Right ventricle myocardium inferior (tissue), 1 donor: ENCODE measurements at regions of chr10 and their contacts with region 1.

Region 1: DNA sequence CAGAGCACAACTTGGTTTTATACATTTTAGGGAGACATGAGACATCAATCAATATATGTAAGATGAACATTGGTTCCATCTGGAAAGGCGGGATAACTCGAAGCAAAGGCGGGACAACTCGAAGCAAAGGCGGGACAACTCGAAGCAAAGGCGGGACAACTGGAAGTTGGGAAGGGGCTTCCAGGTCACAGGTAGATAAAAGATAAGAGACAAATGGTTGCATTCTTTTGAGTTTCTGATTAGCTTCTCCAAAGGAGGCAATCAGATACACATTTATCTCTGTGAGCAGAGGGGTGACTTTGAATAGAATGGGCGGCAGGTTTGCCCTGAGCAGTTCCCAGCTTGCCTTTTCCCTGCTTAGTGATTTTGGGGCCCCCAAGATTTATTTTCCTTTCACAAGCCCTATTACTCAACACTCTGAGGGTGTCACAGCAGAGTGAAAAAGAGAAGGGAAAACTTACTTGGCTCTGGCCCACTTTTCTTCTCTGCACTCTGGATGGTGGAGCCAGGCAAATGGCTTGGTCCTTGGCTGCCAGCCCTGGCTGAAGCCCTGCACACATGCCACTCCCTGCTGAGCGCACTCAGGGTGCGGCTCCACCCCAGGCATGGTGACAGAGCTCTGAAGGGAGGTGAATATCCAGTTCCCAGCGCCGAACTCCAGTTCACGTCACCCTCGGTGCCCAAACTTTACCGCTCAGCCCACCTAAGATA is 46.7 kb downstream of the PARD3 start:
- DNase-seq: peak; percentile 87
- ATAC-seq: peak; percentile 94

Region 2: DNA sequence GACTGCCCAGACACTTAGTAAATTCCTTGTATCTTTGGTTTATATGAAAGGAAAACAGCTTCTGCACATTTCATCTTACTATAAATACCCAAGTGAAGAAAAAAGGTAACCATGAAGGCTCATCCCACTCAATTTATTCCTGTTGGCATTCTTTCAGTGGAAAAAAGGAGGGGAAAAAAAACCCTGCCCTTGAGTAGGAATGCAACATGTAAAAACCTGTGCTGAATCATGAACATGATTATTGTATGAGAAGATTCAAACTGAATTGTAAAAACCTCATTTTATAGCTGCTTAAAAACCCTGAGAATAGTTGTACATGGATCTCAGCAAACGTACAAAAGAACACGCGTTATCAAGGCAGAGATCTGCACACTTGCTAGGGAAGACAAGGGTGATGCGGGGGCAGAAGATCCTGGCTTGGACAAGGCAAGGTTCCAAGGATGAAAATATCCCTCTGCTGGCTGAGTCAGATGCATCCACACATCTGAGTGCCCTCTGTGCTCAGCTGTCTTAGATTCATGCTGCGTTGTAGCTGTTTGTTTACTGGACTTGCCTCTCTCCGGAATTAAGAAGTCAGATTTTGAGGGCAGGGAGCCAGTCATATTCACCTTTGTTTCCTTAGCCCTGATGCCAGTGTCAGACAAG is 611.5 kb before region 1 on chr10:
- intact Hi-C with region 1: no loop called
- DNase-seq: no peak
- ATAC-seq: no peak

Region 3: DNA sequence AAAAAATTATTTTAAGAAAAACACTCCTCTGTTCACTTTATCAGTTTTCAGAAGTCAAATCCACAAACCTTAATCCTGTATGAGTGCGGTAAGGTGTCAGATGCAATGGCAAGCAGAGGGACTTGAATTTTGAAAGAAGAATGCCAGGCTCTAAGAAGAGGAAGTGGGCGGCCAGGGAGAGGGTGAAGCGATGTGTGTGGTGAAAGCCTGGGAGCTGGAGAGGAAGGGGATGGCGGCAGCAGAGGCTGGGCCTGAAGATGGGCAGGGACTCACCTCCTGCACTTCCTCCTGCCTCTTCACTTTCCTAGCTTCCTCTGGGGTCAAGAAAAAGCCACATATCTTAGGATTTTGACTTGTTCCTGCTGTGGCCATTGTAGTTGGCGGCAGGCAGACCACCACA is 563.0 kb before region 1 on chr10:
- intact Hi-C with region 1: no loop called
- DNase-seq: peak; percentile 64
- ATAC-seq: no peak

Region 4: GRCh38 chr10:34710391-34710751 is 58.0 kb before region 1 on chr10:
- intact Hi-C with region 1: loop called (anchors 5 kb)
- DNase-seq: no peak
- ATAC-seq: peak; percentile 56